Thyroid gland (tissue), 4 donors: ENCODE measurements at regions of chr2 and their contacts with region 1.

Region 1: GRCh38 chr2:120312861-120313694 is 32.9 kb upstream of the INHBB start:
- DNase-seq: peak; percentile 84 to 90
- H3K4me3 ChIP-seq: peak overlapping the region in 1 of 3 donors; percentile 27
- H3K27ac ChIP-seq: peak overlapping the region in 2 of 3 donors; percentile 16 to 41
- H3K4me1 ChIP-seq: peaks cover 0 to 5% of the 10 kb centered on the region in 2 donors
- H3K27me3 ChIP-seq: no peaks in the 10 kb centered on the region
- CTCF ChIP-seq: peak; percentile 74 to 94 (median 88)
- POLR2A ChIP-seq: no peak

Region 2: DNA sequence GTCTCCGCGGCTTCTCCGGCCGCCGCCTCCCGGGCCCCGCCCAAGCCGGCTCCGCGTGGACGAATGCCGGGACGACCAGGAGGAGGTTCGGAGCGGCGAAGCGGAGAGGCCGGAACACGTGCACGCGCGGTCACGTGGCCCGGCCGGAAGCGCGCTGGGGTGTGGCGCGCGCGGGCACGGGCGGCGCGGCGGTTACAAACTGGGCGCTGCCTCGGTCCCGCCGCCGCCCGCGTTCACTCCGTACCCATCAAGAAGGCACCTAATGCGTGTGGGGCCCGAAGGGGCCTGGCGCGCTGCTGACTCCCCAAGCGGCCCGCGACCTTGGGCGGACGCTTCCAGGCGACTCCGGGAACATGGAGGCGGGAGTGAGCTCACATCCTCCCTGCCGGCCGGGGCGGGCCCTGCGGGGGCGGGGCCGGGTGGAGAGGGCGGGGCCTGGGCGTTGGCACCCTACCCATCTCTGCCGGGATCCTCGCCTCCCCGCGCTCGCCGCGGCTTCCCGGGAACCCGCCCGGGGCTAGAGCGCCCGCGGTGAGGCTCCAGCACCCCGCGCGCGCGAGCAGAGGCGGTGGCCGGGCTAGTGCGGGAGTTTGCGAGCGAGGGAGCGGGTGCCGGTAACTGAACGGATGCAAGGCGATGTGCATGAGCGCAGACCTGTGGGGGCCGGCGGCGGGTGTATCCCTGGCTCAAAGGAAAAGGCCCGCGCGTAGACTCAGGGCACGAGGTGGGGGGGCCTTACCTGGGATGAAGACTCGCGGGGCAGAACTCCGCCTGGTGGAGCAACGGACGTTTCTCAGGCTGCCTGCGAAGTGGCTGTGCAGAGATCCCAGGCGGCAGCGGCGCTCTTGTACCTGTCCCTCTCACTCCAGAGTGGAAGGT is 89.8 kb before region 1 on chr2 and contains the start of gene TMEM185B:
- intact Hi-C with region 1: loop called (anchors 10 kb)
- DNase-seq: peak; percentile 89
- H3K4me3 ChIP-seq: peak within 1 kb of the TSS; percentile 56 to 75 (median 65)
- H3K27ac ChIP-seq: peak within 1 kb of the TSS; percentile 92 to 95 (median 93)
- H3K4me1 ChIP-seq: peaks cover 21 to 23% of the 10 kb centered on the region in 2 donors
- H3K27me3 ChIP-seq: no peaks in the 10 kb centered on the region
- CTCF ChIP-seq: peak in 5 of 6 experiments; percentile 16 to 63 (median 52)
- POLR2A ChIP-seq: peak in 1 of 2 donors; percentile 73
- total RNA-seq, gene TMEM185B: 35.9 to 47.9 (median 44.6) TPM

Region 3: GRCh38 chr2:121044412-121044811 is 731.3 kb after region 1 on chr2:
- intact Hi-C with region 1: no loop called
- DNase-seq: no peak
- H3K4me3 ChIP-seq: no peak overlapping the region
- H3K27ac ChIP-seq: no peak overlapping the region
- H3K4me1 ChIP-seq: no peaks in the 10 kb centered on the region
- H3K27me3 ChIP-seq: no peaks in the 10 kb centered on the region
- CTCF ChIP-seq: no peak
- POLR2A ChIP-seq: no peak